Kidney (tissue), 22 donors: ENCODE measurements at regions of chr22 and their contacts with region 1.

Region 1: GRCh38 chr22:41091132-41092022 is 1.0 kb upstream of the EP300 start:
- DNase-seq: peak; percentile 99 to 100 (median 100)
- H3K4me3 ChIP-seq: peak overlapping the region; percentile 78 to 93 (median 78)
- H3K27ac ChIP-seq: peak overlapping the region; percentile 100
- H3K4me1 ChIP-seq: peaks cover 0 to 7% (median 5%) of the 10 kb centered on the region in 3 donors
- H3K27me3 ChIP-seq: no peaks in the 10 kb centered on the region
- CTCF ChIP-seq: no peak

Region 2: GRCh38 chr22:40950962-40951794 is 140.2 kb before region 1 on chr22 and contains the start of gene RBX1:
- intact Hi-C with region 1: loop called (anchors 10 kb)
- DNase-seq: peak; percentile 98 to 100 (median 99)
- H3K4me3 ChIP-seq: peak within 1 kb of the TSS; percentile 92 to 96 (median 95)
- H3K27ac ChIP-seq: peak within 1 kb of the TSS; percentile 88 to 94
- H3K4me1 ChIP-seq: peaks cover 2 to 8% (median 7%) of the 10 kb centered on the region in 3 donors
- H3K27me3 ChIP-seq: no peaks in the 10 kb centered on the region
- CTCF ChIP-seq: no peak
- total RNA-seq, gene RBX1: 56.2 TPM